WTC11 (cell line): ENCODE measurements at regions of chr16 and their contacts with region 1.

Region 1: GRCh38 chr16:70454222-70455034 is at the start of gene FCSK:
- DNase-seq: peak; percentile 84
- ATAC-seq: peak; percentile 94
- H3K4me3 Mint-ChIP-seq: peak within 1 kb of the TSS; percentile 92
- H3K27ac Mint-ChIP-seq: peak within 1 kb of the TSS; percentile 97
- H3K4me1 Mint-ChIP-seq: peaks cover 10% of the 10 kb centered on the region
- H3K27me3 Mint-ChIP-seq: no peaks in the 10 kb centered on the region
- CTCF ChIP-seq: no peak
- total RNA-seq, gene FCSK: 7.0 to 10.6 TPM (median 8.6 TPM) in 3 replicates

Region 2: GRCh38 chr16:70395345-70395901 is 59.0 kb before region 1 on chr16:
- CTCF ChIA-PET with region 1: interaction called, 11 read pairs
- POLR2A ChIA-PET with region 1: no interaction called
- DNase-seq: peak; percentile 93
- ATAC-seq: peak; percentile 97
- H3K4me3 Mint-ChIP-seq: no peak overlapping the region
- H3K27ac Mint-ChIP-seq: peak overlapping the region; percentile 68; the same call in 1 of the 2 replicates
- H3K4me1 Mint-ChIP-seq: no peaks in the 10 kb centered on the region
- H3K27me3 Mint-ChIP-seq: no peaks in the 10 kb centered on the region
- CTCF ChIP-seq: peak; percentile 93